PC-9 (cell line): ENCODE measurements at regions of chr7 and their contacts with region 1.

Region 1: GRCh38 chr7:22393913-22394729 is 37.2 kb upstream of the RAPGEF5 start:
- DNase-seq: no peak
- H3K4me3 ChIP-seq: no peak overlapping the region
- H3K27ac ChIP-seq: no peak overlapping the region
- H3K4me1 ChIP-seq: no peaks in the 10 kb centered on the region
- H3K27me3 ChIP-seq: no peaks in the 10 kb centered on the region
- CTCF ChIP-seq: no peak

Region 2: GRCh38 chr7:22156205-22156604 is 237.9 kb before region 1 on chr7:
- CTCF ChIA-PET with region 1: no interaction called
- POLR2A ChIA-PET with region 1: interaction called, 12 read pairs
- intact Hi-C with region 1: no loop called
- DNase-seq: peak in 1 of 2 experiments; percentile 58
- H3K4me3 ChIP-seq: no peak overlapping the region
- H3K27ac ChIP-seq: no peak overlapping the region
- H3K4me1 ChIP-seq: no peaks in the 10 kb centered on the region
- H3K27me3 ChIP-seq: no peaks in the 10 kb centered on the region
- CTCF ChIP-seq: no peak

Region 3: GRCh38 chr7:22854158-22855048 is 460.3 kb after region 1 on chr7:
- CTCF ChIA-PET with region 1: no interaction called
- POLR2A ChIA-PET with region 1: no interaction called
- intact Hi-C with region 1: no loop called
- DNase-seq: peak; percentile 66 to 88
- H3K4me3 ChIP-seq: peak overlapping the region; percentile 81
- H3K27ac ChIP-seq: peak overlapping the region; percentile 52
- H3K4me1 ChIP-seq: peaks cover 49% of the 10 kb centered on the region
- H3K27me3 ChIP-seq: no peaks in the 10 kb centered on the region
- CTCF ChIP-seq: peak; percentile 76; the same call in 1 of the 2 replicates